B cell (primary cell): ENCODE measurements at regions of chr15 and their contacts with region 1.

Region 1: DNA sequence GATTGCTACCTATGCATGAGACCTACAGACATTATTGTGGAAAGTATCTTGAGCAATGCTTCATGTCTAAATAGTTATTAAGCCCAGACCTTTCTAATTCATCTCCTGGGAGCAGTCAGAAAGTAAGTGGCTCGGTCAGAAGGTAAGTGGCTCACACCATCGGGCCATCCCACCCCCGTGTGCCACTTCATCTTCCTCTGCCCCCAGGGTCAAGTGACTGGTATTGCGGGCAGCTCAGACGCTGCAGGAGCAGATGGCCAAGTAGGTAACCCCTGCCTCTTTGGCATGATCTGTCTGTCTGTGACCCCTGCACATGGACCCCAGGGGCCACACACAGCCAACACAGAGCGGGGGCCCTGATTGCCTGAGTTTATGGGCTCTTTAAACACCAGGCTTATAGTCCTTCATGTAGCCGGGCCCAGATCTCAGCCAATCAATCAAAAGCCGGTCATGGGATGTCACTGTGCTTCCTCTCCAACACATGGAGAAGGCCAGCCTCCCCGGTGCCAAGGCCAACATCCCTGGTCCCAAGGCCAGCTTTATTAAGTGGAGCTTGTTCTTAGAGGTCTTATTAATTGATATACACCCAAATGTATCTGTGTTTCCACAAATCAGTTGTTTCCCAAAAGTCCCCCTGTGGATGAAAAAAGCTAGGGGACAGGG is 42.9 kb downstream of the LARP6 start:
- DNase-seq: no peak
- ATAC-seq: no peak
- H3K4me3 ChIP-seq: no peak overlapping the region
- H3K4me3 Mint-ChIP-seq: no peak overlapping the region
- H3K27ac ChIP-seq: no peak overlapping the region
- H3K27ac Mint-ChIP-seq: no peak overlapping the region
- H3K4me1 ChIP-seq: peaks cover 0 to 7% of the 10 kb centered on the region in 2 donors
- H3K4me1 Mint-ChIP-seq: peaks cover 12% of the 10 kb centered on the region
- H3K27me3 ChIP-seq: peaks cover 0 to 4% (median 2%) of the 10 kb centered on the region in 4 experiments
- H3K27me3 Mint-ChIP-seq: peaks cover 8% of the 10 kb centered on the region
- CTCF ChIP-seq: no peak

Region 2: GRCh38 chr15:70083946-70084345 is 727.1 kb before region 1 on chr15:
- CTCF ChIA-PET with region 1: no interaction called
- POLR2A ChIA-PET with region 1: no interaction called
- intact Hi-C with region 1: no loop called
- DNase-seq: no peak
- ATAC-seq: no peak
- H3K4me3 ChIP-seq: no peak overlapping the region
- H3K4me3 Mint-ChIP-seq: peak overlapping the region; percentile 37
- H3K27ac ChIP-seq: peak overlapping the region in 1 of 2 donors; percentile 14
- H3K27ac Mint-ChIP-seq: peak overlapping the region; percentile 59
- H3K4me1 ChIP-seq: peaks cover 40 to 46% of the 10 kb centered on the region in 2 donors
- H3K4me1 Mint-ChIP-seq: peaks cover 60% of the 10 kb centered on the region
- H3K27me3 ChIP-seq: no peaks in the 10 kb centered on the region
- H3K27me3 Mint-ChIP-seq: no peaks in the 10 kb centered on the region
- CTCF ChIP-seq: no peak

Region 3: GRCh38 chr15:70679919-70680231 is 131.2 kb before region 1 on chr15:
- CTCF ChIA-PET with region 1: interaction called, 5 read pairs
- POLR2A ChIA-PET with region 1: no interaction called
- intact Hi-C with region 1: loop called (anchors 5 kb)
- DNase-seq: no peak
- ATAC-seq: no peak
- H3K4me3 ChIP-seq: no peak overlapping the region
- H3K4me3 Mint-ChIP-seq: no peak overlapping the region
- H3K27ac ChIP-seq: no peak overlapping the region
- H3K27ac Mint-ChIP-seq: no peak overlapping the region
- H3K4me1 ChIP-seq: no peaks in the 10 kb centered on the region
- H3K4me1 Mint-ChIP-seq: peaks cover 1% of the 10 kb centered on the region
- H3K27me3 ChIP-seq: no peaks in the 10 kb centered on the region
- H3K27me3 Mint-ChIP-seq: peaks cover 20% of the 10 kb centered on the region
- CTCF ChIP-seq: peak; percentile 38

Region 4: DNA sequence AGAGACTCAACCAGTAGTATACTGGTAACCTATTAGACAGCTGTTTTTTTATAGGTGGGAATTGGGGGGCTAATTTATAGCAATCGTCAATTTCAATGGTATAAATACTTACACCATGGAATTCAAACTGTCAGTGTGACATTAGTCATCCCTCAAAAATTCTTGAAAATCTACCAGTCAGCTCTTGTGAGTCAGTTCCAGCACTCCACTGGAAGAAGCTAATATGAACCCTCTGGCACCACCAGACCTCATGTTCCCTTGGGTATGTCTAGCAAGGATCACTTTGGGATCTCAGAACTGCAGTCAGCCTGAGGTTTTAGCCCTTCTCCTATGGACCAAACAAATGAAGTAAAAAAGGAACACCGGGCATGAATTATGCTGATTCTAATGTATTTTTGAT is 35.9 kb before region 1 on chr15:
- CTCF ChIA-PET with region 1: no interaction called
- POLR2A ChIA-PET with region 1: no interaction called
- intact Hi-C with region 1: no loop called
- DNase-seq: no peak
- ATAC-seq: no peak
- H3K4me3 ChIP-seq: no peak overlapping the region
- H3K4me3 Mint-ChIP-seq: no peak overlapping the region
- H3K27ac ChIP-seq: no peak overlapping the region
- H3K27ac Mint-ChIP-seq: no peak overlapping the region
- H3K4me1 ChIP-seq: no peaks in the 10 kb centered on the region
- H3K4me1 Mint-ChIP-seq: no peaks in the 10 kb centered on the region
- H3K27me3 ChIP-seq: no peaks in the 10 kb centered on the region
- H3K27me3 Mint-ChIP-seq: peaks cover 26% of the 10 kb centered on the region
- CTCF ChIP-seq: no peak

Region 5: GRCh38 chr15:70826634-70827033 is 15.6 kb after region 1 on chr15:
- CTCF ChIA-PET with region 1: interaction called, 11 read pairs
- POLR2A ChIA-PET with region 1: no interaction called
- intact Hi-C with region 1: no loop called
- DNase-seq: no peak
- ATAC-seq: no peak
- H3K4me3 ChIP-seq: no peak overlapping the region
- H3K4me3 Mint-ChIP-seq: no peak overlapping the region
- H3K27ac ChIP-seq: no peak overlapping the region
- H3K27ac Mint-ChIP-seq: no peak overlapping the region
- H3K4me1 ChIP-seq: no peaks in the 10 kb centered on the region
- H3K4me1 Mint-ChIP-seq: no peaks in the 10 kb centered on the region
- H3K27me3 ChIP-seq: peaks cover 0 to 10% (median 0%) of the 10 kb centered on the region in 4 experiments
- H3K27me3 Mint-ChIP-seq: peaks cover 25% of the 10 kb centered on the region
- CTCF ChIP-seq: no peak